ENCODE measurements at regions of chr19 and their contacts with region 1.

Region 1: DNA sequence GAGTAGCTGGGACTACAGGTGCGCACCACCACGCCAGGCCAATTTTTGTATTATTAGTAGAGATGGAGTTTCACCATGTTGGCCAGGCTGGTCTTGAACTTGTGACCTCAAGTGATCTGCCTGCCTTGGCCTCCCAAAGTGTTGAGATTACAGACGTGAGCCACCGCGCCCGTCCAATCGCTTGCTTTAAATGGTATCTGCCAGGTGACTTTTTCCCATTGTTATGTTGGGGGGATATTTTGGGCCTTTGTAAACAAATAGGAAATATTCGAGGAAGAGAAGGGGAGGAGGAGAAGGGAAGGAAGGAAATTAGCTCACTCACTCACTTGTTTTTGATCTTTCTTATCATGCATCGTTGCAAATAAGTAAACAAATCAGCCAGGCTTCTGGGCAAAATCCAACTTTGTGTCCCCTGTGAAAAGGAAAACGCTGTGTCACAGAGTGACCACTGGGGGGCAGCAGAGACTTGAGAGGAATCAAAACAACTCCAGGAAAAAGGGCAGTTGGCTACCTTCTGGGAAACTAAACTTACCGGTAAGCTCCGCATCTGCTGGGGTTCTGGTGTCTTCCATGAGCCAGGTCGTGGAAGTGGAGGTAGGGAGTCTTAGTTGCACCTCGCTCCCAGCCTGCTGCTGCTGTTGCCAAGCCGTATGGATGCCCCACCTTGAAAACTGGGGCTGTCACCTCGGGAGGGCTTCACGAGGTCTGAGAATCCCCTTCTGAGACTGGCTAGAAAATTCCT is 9.3 kb upstream of the RANBP3 start:
- DNase-seq: peak; percentile 66 to 78
- ATAC-seq: peak; percentile 8 to 58; a peak in 4 of 6 replicates
- H3K4me3 ChIP-seq: peak overlapping the region; percentile 19; the same call in 1 of the 3 replicates
- H3K27ac ChIP-seq: peak overlapping the region in 1 of 2 experiments; percentile 69; a peak in 3 of 6 replicates
- H3K4me1 ChIP-seq: peaks cover 5% of the 10 kb centered on the region; the same call in 1 of the 3 replicates
- CTCF ChIP-seq: peak; percentile 79
- EP300 ChIP-seq: no peak
- POLR2A ChIP-seq: no peak
- RAD21 ChIP-seq: peak; percentile 74 to 75

Region 2: GRCh38 chr19:5967994-5968430 is 19.2 kb before region 1 on chr19:
- CTCF ChIA-PET with region 1: interaction called, 11 read pairs
- POLR2A ChIA-PET with region 1: no interaction called
- DNase-seq: peak; percentile 68 to 74
- ATAC-seq: peak; percentile 85 to 94
- H3K4me3 ChIP-seq: no peak overlapping the region
- H3K27ac ChIP-seq: peak overlapping the region in 1 of 2 experiments; percentile 52; a peak in 1 of 6 replicates
- H3K4me1 ChIP-seq: peaks cover 4% of the 10 kb centered on the region; the same call in 2 of the 3 replicates
- CTCF ChIP-seq: peak; percentile 63
- EP300 ChIP-seq: no peak
- POLR2A ChIP-seq: no peak
- RAD21 ChIP-seq: peak; percentile 25 to 27; a peak in 1 of 5 replicates

Region 3: DNA sequence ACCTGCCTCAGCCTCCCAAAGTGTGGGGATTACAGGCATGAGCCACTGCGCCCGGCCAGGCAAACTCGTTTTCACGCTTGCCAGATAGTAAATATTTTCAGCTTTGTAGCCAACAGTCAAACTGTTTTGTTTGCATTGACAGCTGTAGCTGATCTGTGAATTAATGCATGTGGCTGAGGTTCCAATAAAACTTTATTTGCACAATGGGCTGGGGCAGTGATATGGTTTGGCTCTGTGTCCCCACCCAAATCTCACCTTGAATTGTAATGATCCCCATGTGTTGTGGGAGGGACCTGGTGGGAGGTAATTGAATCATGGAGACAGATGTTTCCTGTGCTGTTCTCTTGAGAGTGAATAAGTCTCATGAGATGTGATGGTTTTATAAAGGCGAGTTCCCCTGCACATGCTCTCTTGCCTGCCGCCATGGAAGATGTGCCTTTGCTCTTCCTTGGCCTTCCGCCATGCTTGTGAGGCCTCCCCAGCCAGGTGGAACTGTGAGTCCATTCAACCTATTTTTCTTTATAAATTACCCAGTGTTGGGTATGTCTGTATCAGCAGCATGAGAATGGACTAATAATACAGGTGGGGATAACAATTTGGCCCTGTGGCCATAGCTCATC is 13.1 kb after region 1 on chr19:
- CTCF ChIA-PET with region 1: interaction called, 13 read pairs
- POLR2A ChIA-PET with region 1: no interaction called
- DNase-seq: no peak
- ATAC-seq: no peak
- H3K4me3 ChIP-seq: no peak overlapping the region
- H3K27ac ChIP-seq: no peak overlapping the region
- H3K4me1 ChIP-seq: no peaks in the 10 kb centered on the region
- CTCF ChIP-seq: no peak
- EP300 ChIP-seq: no peak
- POLR2A ChIP-seq: no peak
- RAD21 ChIP-seq: no peak

Region 4: GRCh38 chr19:6021878-6022569 is 34.8 kb after region 1 on chr19:
- CTCF ChIA-PET with region 1: interaction called, 41 read pairs
- POLR2A ChIA-PET with region 1: interaction called, 4 read pairs
- DNase-seq: peak; percentile 55 to 66
- ATAC-seq: peak; percentile 83 to 96
- H3K4me3 ChIP-seq: no peak overlapping the region
- H3K27ac ChIP-seq: no peak overlapping the region
- H3K4me1 ChIP-seq: no peaks in the 10 kb centered on the region
- CTCF ChIP-seq: peak; percentile 55
- EP300 ChIP-seq: no peak
- POLR2A ChIP-seq: no peak
- RAD21 ChIP-seq: peak; percentile 50 to 65

Region 5: DNA sequence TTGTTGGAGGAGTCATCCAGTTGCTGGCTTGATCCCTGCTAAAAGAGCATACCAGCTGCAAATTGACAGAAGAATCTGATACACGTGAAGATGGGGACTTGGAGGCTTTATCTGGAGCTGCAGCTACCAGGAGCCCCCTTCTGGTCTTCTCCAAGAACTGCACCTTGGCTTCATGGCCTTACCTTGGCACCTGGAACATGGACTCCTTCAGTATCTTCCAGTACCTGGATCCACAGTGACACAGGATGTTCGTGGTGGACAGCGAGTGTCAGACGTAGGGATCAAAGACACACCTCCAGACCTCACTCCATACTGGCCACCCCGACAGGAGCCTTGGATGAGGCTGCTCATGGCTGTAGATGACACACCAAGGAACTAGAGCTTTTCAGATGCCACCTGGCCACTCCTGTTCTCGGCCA is 138.3 kb after region 1 on chr19:
- CTCF ChIA-PET with region 1: interaction called, 34 read pairs
- POLR2A ChIA-PET with region 1: no interaction called
- DNase-seq: peak in 1 of 2 experiments; percentile 83
- ATAC-seq: peak; percentile 90 to 93
- H3K4me3 ChIP-seq: no peak overlapping the region
- H3K27ac ChIP-seq: no peak overlapping the region
- H3K4me1 ChIP-seq: no peaks in the 10 kb centered on the region
- CTCF ChIP-seq: peak; percentile 79
- EP300 ChIP-seq: no peak
- POLR2A ChIP-seq: no peak
- RAD21 ChIP-seq: peak; percentile 87 to 90

Region 6: GRCh38 chr19:6199240-6199983 is 212.2 kb after region 1 on chr19:
- CTCF ChIA-PET with region 1: no interaction called
- POLR2A ChIA-PET with region 1: no interaction called
- DNase-seq: peak; percentile 98
- ATAC-seq: peak; percentile 93
- H3K4me3 ChIP-seq: peak overlapping the region; percentile 71
- H3K27ac ChIP-seq: peak overlapping the region; percentile 77 to 90
- H3K4me1 ChIP-seq: no peaks in the 10 kb centered on the region
- CTCF ChIP-seq: no peak
- EP300 ChIP-seq: no peak
- POLR2A ChIP-seq: peak; percentile 65
- RAD21 ChIP-seq: no peak